MCF 10A (cell line): ENCODE measurements at regions of chr1 and their contacts with region 1.

Region 1: GRCh38 chr1:230084138-230084880 is 17.3 kb downstream of the GALNT2 start:
- DNase-seq: peak; percentile 100
- H3K4me3 Mint-ChIP-seq: peak overlapping the region; percentile 46
- H3K27ac Mint-ChIP-seq: peak overlapping the region; percentile 80
- H3K4me1 Mint-ChIP-seq: peaks cover 71% of the 10 kb centered on the region
- H3K27me3 Mint-ChIP-seq: no peaks in the 10 kb centered on the region
- CTCF ChIP-seq: no peak

Region 2: DNA sequence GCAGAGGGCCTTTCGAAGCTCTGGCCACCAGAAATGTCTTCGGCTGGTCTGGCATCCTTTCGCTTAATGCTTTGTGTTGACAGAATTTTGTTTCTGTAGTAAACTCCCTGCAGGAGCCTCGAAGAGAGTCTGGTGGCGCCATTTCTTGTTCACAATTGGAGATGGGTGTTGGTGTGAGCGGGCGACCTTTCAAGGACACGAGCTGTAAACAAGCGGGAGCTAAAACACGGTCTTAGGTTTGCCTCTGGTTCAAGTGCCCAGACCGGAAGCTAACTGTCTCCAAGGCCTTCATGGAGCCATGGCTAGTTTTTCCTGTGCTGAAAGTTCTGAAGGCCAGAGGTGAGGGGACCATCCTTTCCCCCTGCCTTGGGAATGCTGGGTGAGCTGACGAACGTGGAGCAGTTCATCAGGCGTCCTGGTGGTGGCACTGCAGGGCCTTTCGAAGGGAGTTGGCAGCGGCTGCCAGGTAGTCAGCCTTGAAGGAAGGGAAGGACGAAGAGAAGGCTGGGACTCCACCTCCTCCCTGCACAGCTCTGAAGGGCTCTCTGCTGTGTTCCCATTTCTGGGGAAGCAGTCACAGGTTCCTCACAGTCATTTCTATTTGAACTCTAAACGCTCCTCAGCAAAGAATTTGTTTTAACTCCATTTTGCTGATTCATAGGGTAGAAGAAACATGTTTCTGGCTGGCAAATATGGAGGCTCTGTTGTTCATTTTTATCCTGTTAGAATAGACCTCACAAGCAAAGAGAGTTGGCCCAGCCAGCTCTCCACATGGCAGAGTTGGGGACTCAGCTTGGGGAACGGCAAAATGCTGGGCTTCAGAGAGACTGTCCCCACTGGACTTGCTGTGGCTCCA is 423.1 kb before region 1 on chr1:
- CTCF ChIA-PET with region 1: interaction called, 138 read pairs
- POLR2A ChIA-PET with region 1: interaction called, 34 read pairs
- intact Hi-C with region 1: loop called (anchors 1 kb)
- DNase-seq: peak; percentile 89
- H3K4me3 Mint-ChIP-seq: no peak overlapping the region
- H3K27ac Mint-ChIP-seq: peak overlapping the region; percentile 13
- H3K4me1 Mint-ChIP-seq: peaks cover 7% of the 10 kb centered on the region
- H3K27me3 Mint-ChIP-seq: no peaks in the 10 kb centered on the region
- CTCF ChIP-seq: peak; percentile 99

Region 3: DNA sequence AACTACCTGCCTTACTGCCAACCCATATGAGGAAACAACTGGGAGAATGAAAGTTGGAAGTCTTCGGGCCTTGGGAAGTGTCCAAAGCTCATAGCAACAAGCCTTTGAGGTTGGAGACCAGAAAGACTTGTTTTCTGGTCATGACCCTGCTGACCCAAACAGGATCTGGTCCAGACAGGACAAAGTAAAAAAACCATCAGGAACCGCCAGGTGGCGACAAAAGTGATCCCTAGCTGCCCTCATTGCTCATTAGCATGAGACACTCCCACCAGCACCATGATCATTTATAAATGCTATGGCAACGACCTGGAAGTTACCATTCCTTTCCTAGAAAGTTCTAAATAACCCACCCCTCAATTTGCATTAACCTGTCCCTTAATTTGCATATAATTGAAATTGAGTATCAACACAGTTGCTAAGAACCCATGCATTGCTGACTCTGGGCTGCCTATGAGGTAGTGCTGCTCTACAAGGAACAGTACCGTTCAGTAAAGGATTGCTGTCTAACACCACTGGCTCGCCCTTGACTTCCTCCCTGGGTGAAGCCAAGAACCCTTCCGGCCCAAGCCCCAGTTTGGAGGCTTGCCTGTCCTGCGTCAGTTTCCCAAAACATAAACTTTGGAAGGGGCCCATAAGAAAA is 369.2 kb before region 1 on chr1:
- CTCF ChIA-PET with region 1: interaction called, 54 read pairs
- POLR2A ChIA-PET with region 1: interaction called, 7 read pairs
- intact Hi-C with region 1: loop called (anchors 1 kb)
- DNase-seq: peak; percentile 83
- H3K4me3 Mint-ChIP-seq: no peak overlapping the region
- H3K27ac Mint-ChIP-seq: peak overlapping the region; percentile 17
- H3K4me1 Mint-ChIP-seq: no peaks in the 10 kb centered on the region
- H3K27me3 Mint-ChIP-seq: no peaks in the 10 kb centered on the region
- CTCF ChIP-seq: peak; percentile 88

Region 4: GRCh38 chr1:229887043-229887822 is 197.1 kb before region 1 on chr1:
- CTCF ChIA-PET with region 1: no interaction called
- POLR2A ChIA-PET with region 1: interaction called, 24 read pairs
- intact Hi-C with region 1: loop called (anchors 1 kb)
- DNase-seq: peak; percentile 97
- H3K4me3 Mint-ChIP-seq: no peak overlapping the region
- H3K27ac Mint-ChIP-seq: peak overlapping the region; percentile 71
- H3K4me1 Mint-ChIP-seq: peaks cover 30% of the 10 kb centered on the region
- H3K27me3 Mint-ChIP-seq: peaks cover 8% of the 10 kb centered on the region
- CTCF ChIP-seq: no peak

Region 5: DNA sequence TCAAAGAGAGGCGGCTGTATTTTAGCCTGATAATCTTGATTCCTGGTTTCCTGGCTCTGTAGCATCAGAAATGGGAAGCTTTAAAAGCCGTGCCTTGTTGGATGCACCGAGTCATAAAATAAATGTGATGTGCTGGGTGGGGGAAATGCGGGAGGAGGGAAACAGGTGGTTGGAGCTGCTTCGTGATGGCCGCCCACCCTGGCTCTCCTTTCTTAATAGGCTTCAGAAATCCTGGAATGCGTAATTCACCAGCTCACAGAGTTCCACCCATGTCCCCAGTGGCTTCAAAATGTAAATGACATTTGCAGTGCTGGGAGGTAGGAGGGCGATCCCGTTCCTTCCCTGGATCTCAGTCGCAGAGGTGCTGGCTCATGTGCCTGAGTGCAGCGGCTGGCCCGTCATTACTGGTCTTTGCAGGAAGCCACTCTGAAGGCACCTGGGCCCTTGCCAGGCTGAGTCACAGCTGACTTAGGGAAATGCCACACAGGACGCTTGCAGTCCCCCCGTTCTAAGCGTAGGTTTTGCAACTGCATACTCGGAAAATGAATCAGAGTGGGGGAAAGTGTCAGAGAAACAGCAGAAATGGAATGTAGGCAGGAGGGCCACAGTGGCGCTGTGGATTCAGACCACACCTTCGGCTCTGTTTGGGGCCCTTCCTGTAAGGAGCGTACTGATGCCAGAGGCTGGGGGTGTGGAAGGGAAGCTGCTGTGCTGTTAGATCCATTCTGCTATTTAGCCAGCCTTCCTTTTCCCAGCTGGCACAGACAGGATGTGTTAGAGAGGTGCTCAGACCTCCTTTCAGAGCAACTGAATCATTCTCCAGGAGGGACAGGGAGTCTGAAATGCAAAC is 20.3 kb after region 1 on chr1:
- CTCF ChIA-PET with region 1: interaction called, 49 read pairs
- POLR2A ChIA-PET with region 1: interaction called, 162 read pairs
- intact Hi-C with region 1: loop called (anchors 1 kb)
- DNase-seq: peak; percentile 100
- H3K4me3 Mint-ChIP-seq: peak overlapping the region; percentile 61
- H3K27ac Mint-ChIP-seq: peak overlapping the region; percentile 65
- H3K4me1 Mint-ChIP-seq: peaks cover 67% of the 10 kb centered on the region
- H3K27me3 Mint-ChIP-seq: no peaks in the 10 kb centered on the region
- CTCF ChIP-seq: peak; percentile 4

Region 6: GRCh38 chr1:230167419-230167852 is 83.1 kb after region 1 on chr1:
- CTCF ChIA-PET with region 1: no interaction called
- POLR2A ChIA-PET with region 1: no interaction called
- intact Hi-C with region 1: no loop called
- DNase-seq: peak; percentile 77
- H3K4me3 Mint-ChIP-seq: no peak overlapping the region
- H3K27ac Mint-ChIP-seq: no peak overlapping the region
- H3K4me1 Mint-ChIP-seq: peaks cover 29% of the 10 kb centered on the region
- H3K27me3 Mint-ChIP-seq: no peaks in the 10 kb centered on the region
- CTCF ChIP-seq: peak; percentile 89